Dorsolateral prefrontal cortex (tissue), 120 donors: ENCODE measurements at regions of chr16 and their contacts with region 1.

Region 1: GRCh38 chr16:88785106-88785924 is at the start of gene PIEZO1:
- DNase-seq: peak in 8 of 10 donors; percentile 42 to 80 (median 60)
- H3K4me3 ChIP-seq: peak within 1 kb of the TSS; percentile 36 to 81 (median 68)
- H3K27ac ChIP-seq: peak within 1 kb of the TSS; percentile 46 to 92 (median 82)
- H3K27me3 ChIP-seq: peaks cover 0 to 30% (median 0%) of the 10 kb centered on the region in 45 donors
- CTCF ChIP-seq: peak; percentile 53 to 96 (median 87)
- total RNA-seq, gene PIEZO1: 14.6 to 86.5 (median 34.6) TPM

Region 2: GRCh38 chr16:88315543-88316105 is 469.7 kb before region 1 on chr16:
- intact Hi-C with region 1: no loop called
- DNase-seq: no peak
- H3K4me3 ChIP-seq: no peak overlapping the region
- H3K27ac ChIP-seq: no peak overlapping the region
- H3K27me3 ChIP-seq: peaks cover 0 to 5% (median 0%) of the 10 kb centered on the region in 45 donors
- CTCF ChIP-seq: no peak

Region 3: DNA sequence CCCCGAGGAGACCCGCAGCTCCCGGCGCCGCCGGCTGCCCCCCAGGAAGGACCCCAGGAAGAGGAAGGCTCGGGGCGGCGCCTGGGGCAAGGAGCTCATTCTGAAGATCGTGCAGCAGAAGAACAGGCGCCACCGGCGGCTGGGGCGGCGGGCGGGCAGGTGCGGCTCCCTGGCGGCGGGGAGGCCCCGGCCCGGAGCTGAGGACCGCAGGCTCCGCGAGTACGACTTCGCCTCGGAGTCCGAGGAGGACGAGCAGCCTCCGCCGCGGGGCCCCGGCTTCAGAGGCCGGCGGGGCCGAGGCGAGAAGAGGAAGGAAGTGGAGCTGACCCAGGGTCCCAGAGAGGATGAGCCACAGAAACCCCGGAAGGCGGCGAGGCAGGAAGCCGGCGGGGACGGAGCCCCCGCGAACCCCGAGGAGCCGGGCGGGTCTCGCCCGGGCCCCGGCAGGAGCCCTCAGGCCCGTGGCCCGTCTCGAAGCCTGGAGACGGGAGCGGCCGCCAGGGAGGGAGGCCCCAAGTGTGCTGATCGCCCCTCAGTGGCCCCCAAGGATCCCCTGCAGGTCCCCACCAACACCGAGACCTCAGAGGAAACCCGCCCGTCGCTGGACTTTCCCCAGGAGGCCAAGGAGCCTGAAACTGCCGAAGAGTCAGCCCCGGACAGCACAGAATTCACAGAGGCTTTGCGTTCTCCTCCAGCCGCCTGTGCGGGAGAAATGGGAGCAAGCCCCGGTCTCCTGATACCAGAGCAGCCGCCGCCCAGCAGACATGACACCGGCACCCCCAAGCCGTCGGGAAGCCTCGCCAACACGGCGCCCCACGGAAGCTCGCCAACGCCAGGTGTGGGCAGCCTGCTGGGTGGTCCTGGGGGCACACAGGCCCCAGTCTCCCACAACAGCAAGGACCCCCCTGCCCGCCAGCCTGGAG is 354.5 kb before region 1 on chr16:
- intact Hi-C with region 1: no loop called
- DNase-seq: no peak
- H3K4me3 ChIP-seq: peak overlapping the region in 56 of 59 donors; percentile 1 to 61 (median 43)
- H3K27ac ChIP-seq: peak overlapping the region in 36 of 59 donors; percentile 2 to 73 (median 50)
- H3K27me3 ChIP-seq: peaks cover 0 to 41% (median 12%) of the 10 kb centered on the region in 45 donors
- CTCF ChIP-seq: no peak

Region 4: DNA sequence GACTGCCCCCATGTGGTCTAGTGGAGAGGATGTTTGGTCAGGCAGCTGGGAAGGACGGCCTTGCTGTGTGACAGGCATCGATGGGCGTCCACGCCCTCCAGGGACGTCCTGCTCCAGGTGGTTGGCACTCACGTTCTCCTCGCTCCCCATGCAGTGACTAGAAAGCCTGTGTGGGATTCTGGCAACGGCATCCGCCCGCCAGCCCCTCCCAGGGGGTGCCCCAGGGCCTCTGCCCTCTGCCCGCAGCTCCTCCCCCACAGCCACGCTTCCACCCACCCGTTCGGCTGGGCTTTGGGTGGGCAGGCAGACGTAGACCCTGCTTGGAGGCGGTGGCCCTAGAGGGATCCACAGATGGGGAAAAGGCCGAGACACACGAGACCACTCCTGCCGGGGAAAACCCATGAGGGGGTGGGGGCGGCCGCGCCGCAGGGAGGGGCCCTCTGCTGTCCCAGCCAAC is 151.6 kb before region 1 on chr16:
- intact Hi-C with region 1: no loop called
- DNase-seq: peak in 1 of 10 donors; percentile 25
- H3K4me3 ChIP-seq: peak overlapping the region in 20 of 59 donors; percentile 8 to 46 (median 37)
- H3K27ac ChIP-seq: no peak overlapping the region
- H3K27me3 ChIP-seq: peaks cover 0 to 7% (median 1%) of the 10 kb centered on the region in 45 donors
- CTCF ChIP-seq: peak in 18 of 56 donors; percentile 4 to 40 (median 22)

Region 5: GRCh38 chr16:88743693-88744576 is 41.4 kb before region 1 on chr16:
- intact Hi-C with region 1: loop called (anchors 2 kb)
- DNase-seq: peak in 9 of 10 donors; percentile 53 to 80 (median 71)
- H3K4me3 ChIP-seq: no peak overlapping the region
- H3K27ac ChIP-seq: no peak overlapping the region
- H3K27me3 ChIP-seq: no peaks in the 10 kb centered on the region
- CTCF ChIP-seq: peak; percentile 71 to 93 (median 86)